Activated CD8-positive, alpha-beta T cell treated with anti-CD3 and anti-CD28 coated beads, Interleukin-2, amount 10 ng/mL, durations not matched to agents 7 days and 5 days (primary cell): ENCODE measurements at regions of chr3 and their contacts with region 1.

Region 1: GRCh38 chr3:119628816-119629445 is 31.2 kb downstream of the PLA1A start:
- DNase-seq: no peak
- ATAC-seq: no peak
- H3K4me3 Mint-ChIP-seq: no peak overlapping the region
- H3K27ac Mint-ChIP-seq: no peak overlapping the region
- H3K4me1 Mint-ChIP-seq: peaks cover 33% of the 10 kb centered on the region
- H3K27me3 Mint-ChIP-seq: peaks cover 8% of the 10 kb centered on the region

Region 2: DNA sequence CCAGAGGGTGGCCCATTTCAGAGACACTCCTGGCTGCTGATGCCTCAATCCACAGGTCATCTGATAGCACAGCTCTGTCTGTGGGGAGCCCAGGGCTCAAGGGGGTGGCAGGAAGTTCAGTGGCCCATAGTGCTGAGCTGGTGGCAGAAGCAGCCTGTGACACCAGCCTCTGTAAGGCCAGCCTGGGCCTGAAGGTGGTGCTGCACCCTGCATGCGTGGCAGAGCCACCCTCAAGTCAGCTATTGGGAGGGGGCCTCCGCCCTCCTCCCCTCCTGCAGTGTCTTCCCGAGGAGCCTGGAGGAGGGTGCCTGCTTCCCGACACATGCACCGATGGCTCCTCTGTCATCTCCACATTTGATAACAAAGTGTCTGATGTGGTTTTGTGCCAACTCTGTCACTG is 28.2 kb before region 1 on chr3:
- CTCF ChIA-PET with region 1: interaction called, 13 read pairs
- POLR2A ChIA-PET with region 1: no interaction called
- DNase-seq: peak; percentile 31
- ATAC-seq: peak; percentile 77
- H3K4me3 Mint-ChIP-seq: no peak overlapping the region
- H3K27ac Mint-ChIP-seq: no peak overlapping the region
- H3K4me1 Mint-ChIP-seq: peaks cover 43% of the 10 kb centered on the region
- H3K27me3 Mint-ChIP-seq: peaks cover 3% of the 10 kb centered on the region

Region 3: DNA sequence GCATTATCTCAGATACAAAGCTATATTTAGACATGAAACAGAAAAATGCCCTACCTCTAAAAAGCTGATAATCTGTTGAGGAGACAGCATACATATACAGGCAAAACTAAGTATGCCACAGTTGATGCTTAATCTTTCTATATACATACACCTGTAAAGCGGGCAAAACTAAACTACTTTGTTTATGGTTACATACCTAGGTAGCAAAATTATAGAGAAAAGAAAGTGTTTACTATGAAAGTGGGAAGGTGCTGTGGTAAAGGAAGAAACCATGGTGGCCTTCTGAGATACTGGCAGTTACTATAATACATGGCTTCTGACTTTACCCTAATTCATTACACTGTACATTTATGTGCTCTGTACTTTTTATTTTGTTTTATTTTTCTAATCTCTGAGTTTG is 117.0 kb after region 1 on chr3:
- CTCF ChIA-PET with region 1: no interaction called
- POLR2A ChIA-PET with region 1: no interaction called
- DNase-seq: no peak
- ATAC-seq: no peak
- H3K4me3 Mint-ChIP-seq: no peak overlapping the region
- H3K27ac Mint-ChIP-seq: no peak overlapping the region
- H3K4me1 Mint-ChIP-seq: no peaks in the 10 kb centered on the region
- H3K27me3 Mint-ChIP-seq: peaks cover 33% of the 10 kb centered on the region